Uterus (tissue), 4 donors: ENCODE measurements at regions of chr1 and their contacts with region 1.

Region 1: GRCh38 chr1:169348383-169349036 is 19.1 kb downstream of the NME7 start:
- DNase-seq: no peak
- H3K4me3 ChIP-seq: no peak overlapping the region
- H3K27ac ChIP-seq: no peak overlapping the region
- H3K4me1 ChIP-seq: peaks cover 0 to 7% of the 10 kb centered on the region in 2 donors
- H3K27me3 ChIP-seq: no peaks in the 10 kb centered on the region
- CTCF ChIP-seq: peak; percentile 68 to 85 (median 75)
- POLR2A ChIP-seq: no peak

Region 2: DNA sequence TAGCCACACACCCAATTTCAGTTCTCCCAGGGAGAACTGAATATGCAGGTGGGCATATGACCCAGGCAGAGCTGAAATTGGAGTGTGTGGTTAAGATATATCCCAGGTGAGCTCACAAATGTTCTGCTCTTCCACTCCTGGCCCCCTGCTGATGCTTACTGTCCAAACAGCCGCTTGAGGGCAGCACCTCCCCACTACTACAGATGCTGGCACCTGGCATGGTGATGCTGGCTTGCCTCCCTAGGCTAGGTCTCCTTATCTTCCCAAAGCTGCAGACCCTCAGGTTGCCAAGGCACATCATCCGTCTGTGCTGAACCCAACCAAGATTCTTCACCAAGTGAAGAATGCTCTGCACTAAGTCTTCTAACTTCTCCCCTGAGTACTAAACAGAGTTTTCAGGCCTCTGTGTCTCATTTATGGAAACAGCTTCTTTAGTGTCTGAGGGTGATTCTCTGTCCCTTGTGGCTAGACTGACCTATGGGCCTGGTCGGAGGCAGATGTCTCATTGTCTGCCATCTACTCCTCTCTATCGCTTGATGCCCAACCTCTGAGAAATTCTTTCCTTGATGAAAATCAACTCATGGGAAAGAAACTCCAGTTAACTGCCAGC is 744.9 kb before region 1 on chr1:
- intact Hi-C with region 1: loop called (anchors 10 kb)
- DNase-seq: peak; percentile 78 to 83
- H3K4me3 ChIP-seq: no peak overlapping the region
- H3K27ac ChIP-seq: no peak overlapping the region
- H3K4me1 ChIP-seq: no peaks in the 10 kb centered on the region
- H3K27me3 ChIP-seq: no peaks in the 10 kb centered on the region
- CTCF ChIP-seq: peak; percentile 69 to 86 (median 80)
- POLR2A ChIP-seq: no peak